ENCODE measurements at regions of chr10 and their contacts with region 1.

Region 1: DNA sequence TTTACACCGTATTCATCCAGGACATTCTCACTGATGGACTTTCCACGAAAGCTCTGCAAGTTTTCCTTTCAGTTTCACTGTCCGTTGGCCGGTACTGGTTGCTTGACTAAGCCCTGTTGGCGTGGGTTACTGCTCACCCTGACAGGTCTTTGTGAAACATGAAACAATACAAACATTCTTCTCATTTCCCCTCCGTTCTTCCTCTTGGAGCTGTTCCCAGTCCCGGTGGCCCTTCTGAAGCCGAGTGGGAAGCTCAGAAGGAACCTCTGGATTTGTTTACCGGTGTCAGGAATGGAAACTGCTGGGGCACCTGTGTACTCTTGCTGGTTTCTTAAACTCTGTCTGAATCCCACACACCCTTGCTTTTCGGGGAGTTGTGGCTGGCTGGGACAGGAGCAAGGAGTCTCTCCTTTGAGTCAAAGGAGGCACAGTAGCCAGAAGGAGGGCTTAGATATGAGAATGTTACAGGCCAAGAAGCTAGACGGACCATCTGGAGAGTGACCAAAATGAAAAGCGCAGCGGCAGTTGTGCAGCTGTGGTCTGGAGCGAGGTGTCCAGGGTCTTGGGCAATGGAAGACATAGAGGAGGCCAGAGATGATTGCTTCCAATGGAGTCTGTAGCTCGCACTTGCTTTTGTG is 45.7 kb downstream of the LYZL2 start:
- DNase-seq: peak; percentile 74 to 89
- ATAC-seq: peak; percentile 91 to 94
- H3K4me3 ChIP-seq: peak overlapping the region; percentile 29
- H3K27ac ChIP-seq: peak overlapping the region; percentile 72 to 88
- H3K4me1 ChIP-seq: peaks cover 35% of the 10 kb centered on the region
- CTCF ChIP-seq: no peak
- EP300 ChIP-seq: peak in 1 of 2 experiments; percentile 64; a peak in 1 of 5 replicates
- POLR2A ChIP-seq: no peak
- RAD21 ChIP-seq: 0 out of 5 replicates have a peak, but pooled peaks of 1 of the 2 experiments have one; percentile 22

Region 2: GRCh38 chr10:30433730-30434272 is 150.1 kb before region 1 on chr10 and contains the start of gene MAP3K8:
- CTCF ChIA-PET with region 1: interaction called, 5 read pairs
- POLR2A ChIA-PET with region 1: interaction called, 12 read pairs
- DNase-seq: peak; percentile 83 to 94
- ATAC-seq: peak; percentile 79 to 87
- H3K4me3 ChIP-seq: peak within 1 kb of the TSS; percentile 94
- H3K27ac ChIP-seq: peak within 1 kb of the TSS; percentile 91 to 97
- H3K4me1 ChIP-seq: peaks cover 55% of the 10 kb centered on the region
- CTCF ChIP-seq: no peak
- EP300 ChIP-seq: no peak
- POLR2A ChIP-seq: peak; percentile 92
- RAD21 ChIP-seq: no peak; a peak in 1 of 5 replicates
- polyA plus RNA-seq, gene MAP3K8: 45.1 and 50.8 TPM in 2 replicates

Region 3: GRCh38 chr10:30529373-30529998 is 54.4 kb before region 1 on chr10:
- CTCF ChIA-PET with region 1: interaction called, 10 read pairs
- POLR2A ChIA-PET with region 1: no interaction called
- DNase-seq: no peak
- ATAC-seq: no peak
- H3K4me3 ChIP-seq: no peak overlapping the region
- H3K27ac ChIP-seq: peak overlapping the region in 1 of 2 experiments; percentile 68; a peak in 3 of 6 replicates
- H3K4me1 ChIP-seq: peaks cover 21% of the 10 kb centered on the region
- CTCF ChIP-seq: no peak
- EP300 ChIP-seq: no peak
- POLR2A ChIP-seq: no peak
- RAD21 ChIP-seq: no peak

Region 4: DNA sequence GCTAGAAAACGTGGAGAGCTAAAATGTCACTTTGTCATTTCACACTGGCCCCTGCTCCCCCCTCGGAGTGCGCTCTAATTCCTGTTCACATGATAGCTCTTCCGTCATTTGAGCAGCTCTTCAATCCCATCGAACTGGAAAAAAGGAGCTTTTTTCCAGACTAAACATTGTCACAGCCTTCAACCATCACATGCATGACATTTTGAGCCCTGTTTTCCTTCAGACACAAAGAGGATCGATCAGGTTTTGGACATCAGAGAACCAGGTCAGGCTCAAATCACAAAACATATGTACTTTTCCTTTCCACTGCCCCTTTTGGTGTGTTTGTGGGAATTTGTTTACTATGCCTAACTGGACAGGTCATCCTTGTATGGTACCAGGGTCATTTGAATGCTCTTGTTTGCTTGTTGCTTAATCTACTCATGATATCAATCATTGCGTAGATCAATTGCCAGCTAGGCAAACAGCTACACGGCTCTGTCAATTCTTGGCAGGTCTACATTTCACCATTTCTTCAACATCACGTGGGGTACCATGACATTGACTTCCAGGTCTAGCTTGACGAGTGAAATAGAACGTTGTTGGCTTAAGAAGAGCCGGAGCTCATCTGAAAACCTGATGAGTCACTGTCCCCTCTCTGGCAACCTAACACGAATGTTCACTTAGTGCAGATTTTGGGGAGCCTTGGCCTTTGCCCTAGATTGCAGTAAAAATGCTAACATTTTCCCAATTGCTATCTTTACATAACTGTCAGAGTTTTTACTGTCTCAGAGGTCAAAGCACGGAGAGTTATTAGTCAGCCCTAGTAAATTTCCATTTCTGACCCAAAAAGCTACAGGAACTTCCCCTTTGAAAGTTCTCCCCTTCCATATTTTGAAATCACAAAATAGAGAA is 41.6 kb before region 1 on chr10:
- CTCF ChIA-PET with region 1: interaction called, 37 read pairs
- POLR2A ChIA-PET with region 1: no interaction called
- DNase-seq: peak in 1 of 2 experiments; percentile 78
- ATAC-seq: peak; percentile 55 to 63; a peak in 5 of 6 replicates
- H3K4me3 ChIP-seq: no peak overlapping the region
- H3K27ac ChIP-seq: peak overlapping the region; percentile 78 to 88
- H3K4me1 ChIP-seq: peaks cover 61% of the 10 kb centered on the region
- CTCF ChIP-seq: no peak
- EP300 ChIP-seq: peak; percentile 58 to 88; a peak in 3 of 5 replicates
- POLR2A ChIP-seq: no peak
- RAD21 ChIP-seq: no peak; a peak in 1 of 5 replicates

Region 5: DNA sequence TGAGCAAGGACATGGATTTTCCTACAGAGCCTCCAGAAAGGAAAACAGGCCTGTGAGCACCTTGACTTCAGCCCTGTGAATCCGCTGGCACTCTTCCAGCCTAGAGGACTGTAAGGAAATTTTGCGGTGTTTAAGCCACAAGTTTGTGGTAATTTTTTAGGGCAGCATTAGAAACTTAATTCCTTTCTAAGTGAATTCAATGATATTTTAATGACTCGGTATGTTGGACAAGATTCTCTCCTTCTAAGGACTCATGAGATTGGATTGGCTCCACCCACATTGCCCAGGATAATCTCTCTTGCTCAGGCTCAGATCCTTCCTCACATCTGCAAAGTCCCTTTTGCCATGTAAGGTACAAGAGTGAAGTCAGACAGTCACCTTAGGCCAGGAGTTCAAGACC is 41.2 kb after region 1 on chr10:
- CTCF ChIA-PET with region 1: no interaction called
- POLR2A ChIA-PET with region 1: no interaction called
- DNase-seq: no peak
- ATAC-seq: no peak
- H3K4me3 ChIP-seq: no peak overlapping the region
- H3K27ac ChIP-seq: peak overlapping the region in 1 of 2 experiments; percentile 31; a peak in 1 of 6 replicates
- H3K4me1 ChIP-seq: no peaks in the 10 kb centered on the region
- CTCF ChIP-seq: no peak
- EP300 ChIP-seq: no peak
- POLR2A ChIP-seq: no peak
- RAD21 ChIP-seq: no peak

Region 6: GRCh38 chr10:30701451-30702173 is 117.7 kb after region 1 on chr10:
- CTCF ChIA-PET with region 1: no interaction called
- POLR2A ChIA-PET with region 1: no interaction called
- DNase-seq: peak in 1 of 2 experiments; percentile 57
- ATAC-seq: peak; percentile 62 to 71; a peak in 5 of 6 replicates
- H3K4me3 ChIP-seq: no peak overlapping the region
- H3K27ac ChIP-seq: peak overlapping the region; percentile 6 to 65; a peak in 4 of 6 replicates
- H3K4me1 ChIP-seq: peaks cover 18% of the 10 kb centered on the region
- CTCF ChIP-seq: no peak
- EP300 ChIP-seq: peak in 1 of 2 experiments; percentile 38; a peak in 1 of 5 replicates
- POLR2A ChIP-seq: no peak
- RAD21 ChIP-seq: no peak

Region 7: DNA sequence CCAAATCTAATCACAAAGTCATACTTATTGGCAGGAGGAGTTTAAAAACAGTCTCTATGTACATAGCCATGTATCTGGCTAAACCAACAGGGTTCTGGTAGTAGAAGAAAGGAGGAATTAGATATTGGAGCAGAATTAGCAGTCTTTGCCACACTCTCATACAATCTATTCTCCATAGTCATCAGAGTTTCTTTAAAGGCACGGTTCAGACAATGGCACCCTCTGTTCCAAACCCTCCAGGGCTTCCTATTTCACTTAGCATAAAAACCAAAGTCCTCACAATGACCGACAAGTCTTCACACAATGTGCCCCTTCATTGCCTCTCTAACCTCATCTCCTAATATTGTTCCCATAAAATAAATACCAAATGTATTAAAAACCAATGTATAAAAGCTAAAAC is 435.1 kb after region 1 on chr10:
- CTCF ChIA-PET with region 1: no interaction called
- POLR2A ChIA-PET with region 1: no interaction called
- DNase-seq: no peak
- ATAC-seq: no peak
- H3K4me3 ChIP-seq: no peak overlapping the region
- H3K27ac ChIP-seq: no peak overlapping the region
- H3K4me1 ChIP-seq: no peaks in the 10 kb centered on the region
- CTCF ChIP-seq: no peak
- EP300 ChIP-seq: no peak
- POLR2A ChIP-seq: no peak
- RAD21 ChIP-seq: no peak